GM12878 (cell line): ENCODE measurements at regions of chr17 and their contacts with region 1.

Region 1: DNA sequence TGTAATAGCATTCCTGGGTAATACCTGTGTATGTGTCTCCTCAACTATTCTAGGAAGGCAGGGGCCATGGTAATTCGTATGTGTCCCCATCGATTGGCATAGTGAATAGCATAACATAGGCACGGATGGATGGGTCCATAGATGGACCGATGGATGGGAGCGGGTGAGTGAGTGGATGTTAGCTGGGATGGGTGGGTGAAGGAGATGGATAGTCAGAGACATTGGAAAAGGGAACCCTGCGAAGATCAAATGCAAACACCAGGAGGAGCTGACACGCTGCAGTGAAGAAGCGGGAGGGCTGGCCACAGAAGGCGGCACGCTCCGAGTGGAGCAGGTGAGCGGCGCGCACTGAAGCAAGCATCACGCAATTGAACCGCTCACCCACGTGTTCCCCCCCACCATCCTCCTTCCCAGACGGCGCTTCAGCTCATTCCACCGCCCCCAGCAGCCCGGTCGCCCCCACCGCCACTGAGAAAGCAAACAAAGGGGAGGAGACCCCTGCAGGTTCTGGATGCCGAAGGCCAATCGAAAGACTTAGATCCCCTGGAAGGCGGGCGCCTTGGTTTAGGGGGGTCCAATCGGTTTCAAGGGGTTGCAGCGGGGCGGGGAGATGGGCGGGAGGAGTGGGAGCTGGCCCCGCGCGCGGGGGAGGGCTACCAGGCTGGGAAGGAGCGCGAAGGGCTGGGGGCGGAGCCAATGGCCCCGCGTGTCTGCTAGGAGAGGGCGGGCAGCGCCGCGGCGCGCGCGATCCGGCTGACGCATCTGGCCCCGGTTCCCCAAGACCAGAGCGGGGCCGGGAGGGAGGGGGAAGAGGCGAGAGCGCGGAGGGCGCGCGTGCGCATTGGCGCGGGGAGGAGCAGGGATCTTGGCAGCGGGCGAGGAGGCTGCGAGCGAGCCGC is at the start of gene ARRB2:
- DNase-seq: peak; percentile 94
- ATAC-seq: peak; percentile 91
- H3K4me3 ChIP-seq: peak within 1 kb of the TSS; percentile 80
- H3K27ac ChIP-seq: peak within 1 kb of the TSS; percentile 66
- H3K4me1 ChIP-seq: peaks cover 26% of the 10 kb centered on the region
- H3K27me3 ChIP-seq: no peaks in the 10 kb centered on the region
- CTCF ChIP-seq: peak; percentile 48 to 86 (median 61); a peak in 5 of 6 replicates
- EP300 ChIP-seq: no peak
- POLR2A ChIP-seq: peak; percentile 79
- RAD21 ChIP-seq: peak; percentile 77
- polyA plus RNA-seq, gene ARRB2: 6.5 to 7.3 TPM

Region 2: GRCh38 chr17:4733073-4733531 is 23.1 kb after region 1 on chr17:
- CTCF ChIA-PET with region 1: interaction called, 4 read pairs
- POLR2A ChIA-PET with region 1: interaction called, 23 read pairs
- RAD21 ChIA-PET with region 1: interaction called, 8 read pairs
- SMC1A ChIA-PET with region 1: interaction called, 11 read pairs
- in situ Hi-C with region 1: no loop called
- intact Hi-C with region 1: loop called (anchors 1 kb)
- DNase-seq: no peak
- ATAC-seq: peak; percentile 71
- H3K4me3 ChIP-seq: no peak overlapping the region
- H3K27ac ChIP-seq: no peak overlapping the region
- H3K4me1 ChIP-seq: peaks cover 18% of the 10 kb centered on the region
- H3K27me3 ChIP-seq: 0 out of 4 replicates have a peak, but pooled peaks cover 0 to 1% of the 10 kb centered on the region in 2 experiments
- CTCF ChIP-seq: peak; percentile 52 to 68 (median 58)
- EP300 ChIP-seq: no peak
- POLR2A ChIP-seq: no peak
- RAD21 ChIP-seq: peak; percentile 63

Region 3: DNA sequence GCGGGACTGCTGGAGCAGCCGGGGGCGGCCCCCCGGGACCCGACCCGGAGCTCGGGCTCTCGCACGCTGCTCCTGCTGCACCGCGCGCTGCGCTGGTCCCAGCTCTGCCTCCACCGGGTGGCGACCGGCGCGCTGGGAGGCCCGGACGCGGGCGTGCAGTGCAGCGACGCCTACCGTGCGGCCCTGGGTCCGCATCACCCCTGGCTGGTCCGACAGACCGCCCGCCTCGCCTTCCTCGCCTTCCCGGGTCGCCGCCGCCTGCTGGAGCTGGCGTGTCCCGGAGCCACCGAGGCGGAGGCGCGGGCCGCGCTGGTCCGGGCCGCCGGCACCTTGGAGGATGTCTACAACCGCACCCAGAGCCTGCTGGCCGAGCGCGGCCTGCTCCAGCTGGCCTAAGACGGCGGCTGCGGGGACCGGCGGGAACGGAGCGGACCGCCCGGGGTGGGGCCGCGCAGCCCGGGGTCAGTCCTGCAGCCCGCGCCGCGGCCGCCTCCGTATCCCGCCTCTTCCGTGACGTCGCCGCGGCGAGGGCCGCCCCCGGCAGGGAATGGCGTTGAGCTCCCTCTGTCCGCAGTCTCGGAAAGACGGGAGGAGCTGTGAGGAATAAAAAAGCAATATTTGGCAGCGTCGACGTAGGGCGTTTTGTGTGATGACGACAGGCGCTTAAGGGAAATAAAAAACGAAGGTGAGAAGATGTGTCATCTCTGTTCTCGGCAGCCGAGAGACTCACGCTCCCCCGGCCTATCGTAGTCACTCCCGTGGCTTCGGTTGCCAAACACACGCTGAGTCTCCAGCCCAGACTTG is 80.1 kb after region 1 on chr17:
- CTCF ChIA-PET with region 1: interaction called, 9 read pairs
- POLR2A ChIA-PET with region 1: interaction called, 6 read pairs
- RAD21 ChIA-PET with region 1: interaction called, 14 read pairs
- SMC1A ChIA-PET with region 1: interaction called, 9 read pairs
- in situ Hi-C with region 1: no loop called
- intact Hi-C with region 1: loop called (anchors 5 kb)
- DNase-seq: no peak
- ATAC-seq: peak; percentile 98
- H3K4me3 ChIP-seq: peak overlapping the region; percentile 79
- H3K27ac ChIP-seq: peak overlapping the region; percentile 39; the same call in 1 of the 2 replicates
- H3K4me1 ChIP-seq: peaks cover 12% of the 10 kb centered on the region
- H3K27me3 ChIP-seq: peaks cover 16 to 18% of the 10 kb centered on the region in 2 experiments
- CTCF ChIP-seq: peak; percentile 71 to 86 (median 81)
- EP300 ChIP-seq: no peak
- POLR2A ChIP-seq: peak; percentile 76
- RAD21 ChIP-seq: peak; percentile 38; the same call in 1 of the 2 replicates

Region 4: DNA sequence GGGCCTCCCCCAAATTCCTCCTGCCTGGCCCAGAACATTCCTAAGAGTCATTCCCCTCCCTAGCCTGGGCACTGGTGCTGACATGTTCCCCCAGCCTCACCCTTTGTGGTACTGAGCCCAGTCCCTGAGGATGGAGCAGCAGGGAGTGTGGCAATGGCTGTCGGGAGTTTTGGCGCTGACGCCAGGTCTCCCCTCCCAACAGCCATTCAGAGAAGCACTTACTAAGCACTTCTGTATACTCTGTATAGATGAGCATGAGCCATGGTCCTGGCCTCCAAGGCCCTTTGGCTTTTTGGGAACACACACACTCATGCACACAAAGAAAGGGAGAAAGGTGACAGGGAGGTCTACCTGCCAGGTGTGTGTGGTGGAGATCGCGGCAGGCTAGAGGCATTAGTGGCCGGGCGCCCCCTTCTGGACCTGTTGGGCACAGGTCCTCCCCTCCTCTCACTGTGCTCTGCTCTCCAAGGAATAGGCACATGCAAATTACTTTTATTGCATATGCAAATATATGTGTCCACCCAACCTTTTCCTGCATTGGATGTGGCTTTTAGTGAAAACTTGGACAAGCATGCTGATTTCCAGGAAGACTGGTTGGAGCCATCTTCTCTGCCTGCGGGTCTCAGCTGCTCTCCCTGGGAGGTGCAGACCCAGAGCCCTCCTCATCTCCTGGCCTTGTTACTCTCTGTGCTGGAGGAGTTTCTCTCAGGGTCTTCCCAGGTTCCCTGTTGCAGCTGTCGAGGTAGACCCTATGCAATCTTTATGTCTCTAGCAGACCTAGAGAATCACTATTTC is 171.9 kb after region 1 on chr17:
- CTCF ChIA-PET with region 1: interaction called, 12 read pairs
- POLR2A ChIA-PET with region 1: interaction called, 3 read pairs
- RAD21 ChIA-PET with region 1: interaction called, 5 read pairs
- SMC1A ChIA-PET with region 1: interaction called, 5 read pairs
- in situ Hi-C with region 1: loop called (anchors 5 kb)
- intact Hi-C with region 1: no loop called
- DNase-seq: no peak
- ATAC-seq: peak; percentile 96
- H3K4me3 ChIP-seq: no peak overlapping the region
- H3K27ac ChIP-seq: no peak overlapping the region
- H3K4me1 ChIP-seq: no peaks in the 10 kb centered on the region
- H3K27me3 ChIP-seq: no peaks in the 10 kb centered on the region
- CTCF ChIP-seq: peak; percentile 84 to 88 (median 87)
- EP300 ChIP-seq: no peak
- POLR2A ChIP-seq: no peak
- RAD21 ChIP-seq: peak; percentile 65

Region 5: GRCh38 chr17:4891411-4892342 is 181.6 kb after region 1 on chr17:
- CTCF ChIA-PET with region 1: interaction called, 8 read pairs
- POLR2A ChIA-PET with region 1: no interaction called
- RAD21 ChIA-PET with region 1: interaction called, 13 read pairs
- SMC1A ChIA-PET with region 1: no interaction called
- in situ Hi-C with region 1: no loop called
- intact Hi-C with region 1: loop called (anchors 2 kb)
- DNase-seq: no peak
- ATAC-seq: no peak
- H3K4me3 ChIP-seq: no peak overlapping the region
- H3K27ac ChIP-seq: no peak overlapping the region
- H3K4me1 ChIP-seq: no peaks in the 10 kb centered on the region
- H3K27me3 ChIP-seq: no peaks in the 10 kb centered on the region
- CTCF ChIP-seq: no peak
- EP300 ChIP-seq: no peak
- POLR2A ChIP-seq: peak; percentile 38; the same call in 1 of the 2 replicates
- RAD21 ChIP-seq: no peak

Region 6: GRCh38 chr17:4903051-4903818 is 193.2 kb after region 1 on chr17 and contains the start of gene CHRNE:
- CTCF ChIA-PET with region 1: interaction called, 11 read pairs
- POLR2A ChIA-PET with region 1: no interaction called
- RAD21 ChIA-PET with region 1: interaction called, 5 read pairs
- SMC1A ChIA-PET with region 1: interaction called, 4 read pairs
- in situ Hi-C with region 1: no loop called
- intact Hi-C with region 1: no loop called
- DNase-seq: peak; percentile 37
- ATAC-seq: peak; percentile 80
- H3K4me3 ChIP-seq: no peak within 1 kb of the TSS
- H3K27ac ChIP-seq: no peak within 1 kb of the TSS
- H3K4me1 ChIP-seq: peaks cover 20% of the 10 kb centered on the region
- H3K27me3 ChIP-seq: no peaks in the 10 kb centered on the region; a peak in 2 of 4 replicates
- CTCF ChIP-seq: peak; percentile 73 to 81 (median 77)
- EP300 ChIP-seq: no peak
- POLR2A ChIP-seq: no peak
- RAD21 ChIP-seq: peak; percentile 51
- polyA plus RNA-seq, gene CHRNE: 0.05 TPM in 1 of 2 experiments, not detected in the other